ENCODE measurements at regions of chr10 and their contacts with region 1.

Region 1: DNA sequence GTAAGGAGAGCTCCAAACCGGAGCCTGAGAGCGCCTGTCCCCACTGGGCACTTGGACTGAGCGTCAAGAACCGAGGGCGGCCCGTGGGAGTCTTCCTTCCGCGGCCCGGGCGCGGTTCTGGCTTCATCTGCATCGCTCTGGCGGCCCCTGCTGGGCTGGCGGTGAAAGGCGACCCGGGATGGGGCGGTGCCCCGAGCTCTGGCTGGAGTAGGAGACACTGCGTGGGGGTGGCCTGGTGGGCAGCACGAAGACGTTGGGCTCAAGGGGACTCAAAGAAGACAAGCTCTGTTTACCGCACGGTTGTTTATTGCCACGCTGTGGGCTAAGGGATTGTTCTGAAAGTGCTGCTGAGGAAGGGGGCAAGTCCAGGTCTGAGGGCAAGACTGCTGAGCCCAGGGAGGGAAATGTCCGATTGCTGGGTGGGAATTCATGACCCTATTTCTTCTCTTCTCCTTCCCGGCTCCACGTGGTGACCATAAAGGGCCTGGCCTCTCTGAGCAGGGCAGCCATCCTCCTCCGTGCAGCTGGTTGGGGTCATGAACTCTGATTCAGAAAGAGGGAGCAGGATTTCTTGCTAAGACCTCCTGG is 29.8 kb downstream of the PLAU start:
- DNase-seq: peak; percentile 85
- H3K27ac ChIP-seq: peak overlapping the region; percentile 73
- CTCF ChIP-seq: peak; percentile 93

Region 2: GRCh38 chr10:73848821-73849489 is 91.8 kb before region 1 on chr10:
- CTCF ChIA-PET with region 1: interaction called, 37 read pairs
- POLR2A ChIA-PET with region 1: no interaction called
- DNase-seq: peak; percentile 90
- H3K27ac ChIP-seq: peak overlapping the region; percentile 11
- CTCF ChIP-seq: peak; percentile 98

Region 3: GRCh38 chr10:73879296-73880173 is 61.2 kb before region 1 on chr10:
- CTCF ChIA-PET with region 1: interaction called, 19 read pairs
- POLR2A ChIA-PET with region 1: no interaction called
- DNase-seq: peak; percentile 74
- H3K27ac ChIP-seq: no peak overlapping the region
- CTCF ChIP-seq: peak; percentile 85

Region 4: GRCh38 chr10:73886085-73886529 is 54.6 kb before region 1 on chr10:
- CTCF ChIA-PET with region 1: interaction called, 94 read pairs
- POLR2A ChIA-PET with region 1: interaction called, 7 read pairs
- DNase-seq: peak; percentile 85
- H3K27ac ChIP-seq: peak overlapping the region; percentile 99
- CTCF ChIP-seq: peak; percentile 82

Region 5: DNA sequence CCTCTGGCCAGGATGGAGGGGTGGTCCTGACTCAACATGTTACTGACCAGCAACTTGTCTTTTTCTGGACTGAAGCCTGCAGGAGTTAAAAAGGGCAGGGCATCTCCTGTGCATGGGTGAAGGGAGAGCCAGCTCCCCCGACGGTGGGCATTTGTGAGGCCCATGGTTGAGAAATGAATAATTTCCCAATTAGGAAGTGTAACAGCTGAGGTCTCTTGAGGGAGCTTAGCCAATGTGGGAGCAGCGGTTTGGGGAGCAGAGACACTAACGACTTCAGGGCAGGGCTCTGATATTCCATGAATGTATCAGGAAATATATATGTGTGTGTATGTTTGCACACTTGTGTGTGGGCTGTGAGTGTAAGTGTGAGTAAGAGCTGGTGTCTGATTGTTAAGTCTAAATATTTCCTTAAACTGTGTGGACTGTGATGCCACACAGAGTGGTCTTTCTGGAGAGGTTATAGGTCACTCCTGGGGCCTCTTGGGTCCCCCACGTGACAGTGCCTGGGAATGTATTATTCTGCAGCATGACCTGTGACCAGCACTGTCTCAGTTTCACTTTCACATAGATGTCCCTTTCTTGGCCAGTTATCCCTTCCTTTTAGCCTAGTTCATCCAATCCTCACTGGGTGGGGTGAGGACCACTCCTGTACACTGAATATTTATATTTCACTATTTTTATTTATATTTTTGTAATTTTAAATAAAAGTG is 23.8 kb before region 1 on chr10:
- CTCF ChIA-PET with region 1: interaction called, 16 read pairs
- POLR2A ChIA-PET with region 1: no interaction called
- DNase-seq: no peak
- H3K27ac ChIP-seq: peak overlapping the region; percentile 89
- CTCF ChIP-seq: no peak

Region 6: GRCh38 chr10:74006269-74006668 is 65.5 kb after region 1 on chr10:
- CTCF ChIA-PET with region 1: interaction called, 10 read pairs
- POLR2A ChIA-PET with region 1: no interaction called
- DNase-seq: no peak
- H3K27ac ChIP-seq: no peak overlapping the region
- CTCF ChIP-seq: no peak

Region 7: GRCh38 chr10:74067373-74068352 is 126.9 kb after region 1 on chr10:
- CTCF ChIA-PET with region 1: no interaction called
- POLR2A ChIA-PET with region 1: no interaction called
- DNase-seq: no peak
- H3K27ac ChIP-seq: peak overlapping the region; percentile 49
- CTCF ChIP-seq: no peak